CD8-positive, alpha-beta T cell (primary cell): ENCODE measurements at regions of chr6 and their contacts with region 1.

Region 1: DNA sequence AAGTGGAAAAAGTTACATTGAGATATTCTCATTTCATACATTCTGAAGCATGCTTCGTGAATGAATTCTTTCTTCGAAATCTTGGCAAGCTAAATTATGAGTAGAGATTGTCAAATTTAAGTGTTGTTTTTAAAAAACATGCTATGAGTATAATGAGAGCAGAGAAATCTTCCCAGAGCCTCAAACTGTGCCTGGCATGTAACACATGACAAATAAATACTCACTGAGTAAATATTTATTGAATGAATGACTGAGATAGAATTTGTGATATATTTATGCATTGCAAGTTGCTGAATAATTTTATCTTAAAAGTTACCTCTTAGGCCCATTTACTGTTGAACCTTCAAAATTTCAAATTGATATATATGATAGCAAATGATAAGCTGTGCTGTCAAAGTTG is 24.7 kb upstream of the CD2AP start:
- DNase-seq: no peak
- ATAC-seq: no peak
- H3K4me3 ChIP-seq: no peak overlapping the region
- H3K4me3 Mint-ChIP-seq: no peak overlapping the region
- H3K27ac ChIP-seq: no peak overlapping the region
- H3K27ac Mint-ChIP-seq: no peak overlapping the region
- H3K4me1 ChIP-seq: no peaks in the 10 kb centered on the region
- H3K4me1 Mint-ChIP-seq: no peaks in the 10 kb centered on the region
- H3K27me3 ChIP-seq: no peaks in the 10 kb centered on the region
- H3K27me3 Mint-ChIP-seq: no peaks in the 10 kb centered on the region
- CTCF ChIP-seq: no peak

Region 2: DNA sequence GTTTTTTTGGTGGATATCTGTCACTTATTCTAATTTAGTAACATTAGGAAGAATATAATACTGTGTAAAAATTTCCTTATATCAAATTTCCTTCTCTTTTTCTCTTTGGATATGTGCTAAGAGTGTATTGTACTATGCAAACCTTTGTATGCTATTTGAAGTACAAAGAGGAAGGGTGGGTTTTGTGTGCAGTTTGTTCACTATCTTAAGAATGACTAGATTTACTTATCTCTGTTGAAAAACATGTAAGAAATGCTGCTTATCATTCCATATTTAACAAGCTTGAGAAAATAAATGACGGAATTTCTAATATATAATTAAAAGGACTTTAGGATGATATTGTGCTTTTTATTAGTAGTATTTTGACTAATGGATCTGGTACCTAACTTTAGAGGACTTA is 37.8 kb after region 1 on chr6:
- CTCF ChIA-PET with region 1: no interaction called
- POLR2A ChIA-PET with region 1: no interaction called
- intact Hi-C with region 1: loop called in 1 of 2 experiments (anchors 1 kb)
- DNase-seq: no peak
- ATAC-seq: no peak
- H3K4me3 ChIP-seq: no peak overlapping the region
- H3K4me3 Mint-ChIP-seq: no peak overlapping the region
- H3K27ac ChIP-seq: no peak overlapping the region
- H3K27ac Mint-ChIP-seq: no peak overlapping the region
- H3K4me1 ChIP-seq: peaks cover 9% of the 10 kb centered on the region
- H3K4me1 Mint-ChIP-seq: peaks cover 70% of the 10 kb centered on the region
- H3K27me3 ChIP-seq: no peaks in the 10 kb centered on the region
- H3K27me3 Mint-ChIP-seq: no peaks in the 10 kb centered on the region
- CTCF ChIP-seq: no peak